Endothelial cell of umbilical vein (primary cell): ENCODE measurements at regions of chr17 and their contacts with region 1.

Region 1: GRCh38 chr17:40168262-40168832 is 8.9 kb upstream of the RAPGEFL1 start:
- DNase-seq: peak; percentile 65
- H3K4me3 ChIP-seq: no peak overlapping the region
- H3K27ac ChIP-seq: peak overlapping the region; percentile 4
- H3K4me1 ChIP-seq: no peaks in the 10 kb centered on the region
- H3K27me3 ChIP-seq: no peaks in the 10 kb centered on the region
- CTCF ChIP-seq: peak; percentile 53 to 65
- POLR2A ChIP-seq: no peak

Region 2: GRCh38 chr17:40015005-40015997 is 153.0 kb before region 1 on chr17 and contains the start of gene CSF3:
- CTCF ChIA-PET with region 1: interaction called, 19 read pairs
- POLR2A ChIA-PET with region 1: no interaction called
- dilution Hi-C with region 1: no loop called
- intact Hi-C with region 1: loop called (anchors 1 kb)
- DNase-seq: peak; percentile 31
- H3K4me3 ChIP-seq: peak within 1 kb of the TSS in 1 of 3 experiments; percentile 5
- H3K27ac ChIP-seq: peak within 1 kb of the TSS; percentile 88
- H3K4me1 ChIP-seq: peaks cover 56% of the 10 kb centered on the region
- H3K27me3 ChIP-seq: no peaks in the 10 kb centered on the region
- CTCF ChIP-seq: no peak
- POLR2A ChIP-seq: no peak
- total RNA-seq, gene CSF3: 2.4 and 2.9 TPM in 2 replicates

Region 3: DNA sequence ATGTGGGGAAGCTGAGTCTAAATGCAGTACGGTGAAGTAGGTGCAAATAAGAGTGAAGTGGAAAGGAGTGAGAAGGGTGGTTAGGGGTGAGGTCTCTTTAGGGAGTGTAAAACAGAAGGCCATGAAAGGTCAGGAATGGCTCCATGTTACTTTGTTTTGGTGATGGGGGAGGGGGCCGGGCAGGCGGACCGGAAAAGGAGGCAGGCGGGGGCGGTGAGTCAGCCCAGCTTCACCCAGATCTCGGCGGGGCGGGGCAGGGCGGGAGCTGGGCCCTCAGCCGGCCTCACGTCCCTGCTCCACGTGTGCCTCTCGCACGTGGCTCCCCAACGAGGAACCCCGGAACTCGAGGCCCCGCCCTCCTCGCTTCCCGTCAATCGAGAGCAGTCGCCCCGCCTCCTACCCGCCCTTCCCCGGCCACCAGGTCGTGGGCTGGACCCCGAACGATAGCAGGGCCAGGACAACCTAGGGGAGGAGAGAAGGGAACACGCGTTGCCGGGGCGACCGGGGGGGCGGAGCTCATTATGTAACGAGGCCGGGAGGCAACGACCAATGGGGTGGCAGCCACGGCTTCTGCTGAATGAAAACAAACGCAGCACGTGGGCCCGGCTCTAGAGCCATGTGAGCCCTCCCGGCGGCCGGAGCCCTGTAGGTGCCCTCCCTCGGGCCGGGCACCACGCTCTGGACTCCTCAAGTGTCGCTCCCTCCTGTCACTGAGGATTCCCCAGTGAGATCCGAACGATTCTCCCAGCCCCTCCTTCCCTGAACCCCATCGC is 69.3 kb before region 1 on chr17:
- CTCF ChIA-PET with region 1: interaction called, 21 read pairs
- POLR2A ChIA-PET with region 1: no interaction called
- dilution Hi-C with region 1: no loop called
- intact Hi-C with region 1: no loop called
- DNase-seq: peak; percentile 97
- H3K4me3 ChIP-seq: peak overlapping the region; percentile 26 to 60 (median 48)
- H3K27ac ChIP-seq: peak overlapping the region; percentile 77
- H3K4me1 ChIP-seq: peaks cover 39% of the 10 kb centered on the region
- H3K27me3 ChIP-seq: no peaks in the 10 kb centered on the region
- CTCF ChIP-seq: no peak
- POLR2A ChIP-seq: peak; percentile 53

Region 4: GRCh38 chr17:40139566-40140058 is 28.7 kb before region 1 on chr17:
- CTCF ChIA-PET with region 1: interaction called, 11 read pairs
- POLR2A ChIA-PET with region 1: interaction called, 7 read pairs
- dilution Hi-C with region 1: no loop called
- intact Hi-C with region 1: no loop called
- DNase-seq: no peak
- H3K4me3 ChIP-seq: peak overlapping the region; percentile 18 to 77 (median 42)
- H3K27ac ChIP-seq: peak overlapping the region; percentile 46
- H3K4me1 ChIP-seq: peaks cover 17% of the 10 kb centered on the region
- H3K27me3 ChIP-seq: no peaks in the 10 kb centered on the region
- CTCF ChIP-seq: no peak
- POLR2A ChIP-seq: no peak

Region 5: GRCh38 chr17:40179923-40180659 is 11.7 kb after region 1 on chr17:
- CTCF ChIA-PET with region 1: interaction called, 10 read pairs
- POLR2A ChIA-PET with region 1: no interaction called
- dilution Hi-C with region 1: no loop called
- intact Hi-C with region 1: no loop called
- DNase-seq: no peak
- H3K4me3 ChIP-seq: no peak overlapping the region
- H3K27ac ChIP-seq: no peak overlapping the region
- H3K4me1 ChIP-seq: peaks cover 3% of the 10 kb centered on the region
- H3K27me3 ChIP-seq: no peaks in the 10 kb centered on the region
- CTCF ChIP-seq: no peak
- POLR2A ChIP-seq: no peak